MCF 10A (cell line): ENCODE measurements at regions of chr1 and their contacts with region 1.

Region 1: DNA sequence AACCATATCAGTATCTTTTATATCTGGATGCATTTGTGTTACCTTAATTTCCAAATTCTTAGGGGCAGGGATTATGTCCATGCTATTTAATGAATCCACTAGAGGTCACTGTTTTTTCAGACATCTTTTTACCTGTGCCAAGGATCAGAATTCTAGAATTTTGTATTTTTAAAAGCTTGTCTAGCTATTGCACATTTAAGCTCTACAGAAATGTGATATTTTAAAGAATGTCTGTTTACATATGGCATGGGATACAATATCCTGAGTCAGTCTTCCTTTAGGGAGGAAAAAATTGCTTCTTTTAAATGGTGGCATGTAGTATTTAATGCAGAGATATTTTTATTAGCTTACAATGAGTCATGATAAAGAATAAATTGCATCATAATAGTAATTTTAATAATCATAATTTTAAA is 11.3 kb downstream of the RPAP2 start:
- DNase-seq: peak; percentile 37
- H3K4me3 Mint-ChIP-seq: no peak overlapping the region
- H3K27ac Mint-ChIP-seq: no peak overlapping the region
- H3K4me1 Mint-ChIP-seq: no peaks in the 10 kb centered on the region
- H3K27me3 Mint-ChIP-seq: no peaks in the 10 kb centered on the region
- CTCF ChIP-seq: peak; percentile 63

Region 2: GRCh38 chr1:92298573-92299476 is 11.4 kb before region 1 on chr1 and contains the starts of genes GLMN and RPAP2:
- CTCF ChIA-PET with region 1: interaction called, 11 read pairs
- POLR2A ChIA-PET with region 1: interaction called, 4 read pairs
- intact Hi-C with region 1: no loop called
- DNase-seq: peak; percentile 89
- H3K4me3 Mint-ChIP-seq: peak within 1 kb of the TSS; percentile 97
- H3K27ac Mint-ChIP-seq: peak within 1 kb of the TSS; percentile 96
- H3K4me1 Mint-ChIP-seq: peaks cover 10% of the 10 kb centered on the region
- H3K27me3 Mint-ChIP-seq: no peaks in the 10 kb centered on the region
- CTCF ChIP-seq: peak; percentile 3
- total RNA-seq, gene GLMN: 8.6 and 10.1 TPM in 2 replicates
- total RNA-seq, gene RPAP2: 26.2 and 29.3 TPM in 2 replicates

Region 3: DNA sequence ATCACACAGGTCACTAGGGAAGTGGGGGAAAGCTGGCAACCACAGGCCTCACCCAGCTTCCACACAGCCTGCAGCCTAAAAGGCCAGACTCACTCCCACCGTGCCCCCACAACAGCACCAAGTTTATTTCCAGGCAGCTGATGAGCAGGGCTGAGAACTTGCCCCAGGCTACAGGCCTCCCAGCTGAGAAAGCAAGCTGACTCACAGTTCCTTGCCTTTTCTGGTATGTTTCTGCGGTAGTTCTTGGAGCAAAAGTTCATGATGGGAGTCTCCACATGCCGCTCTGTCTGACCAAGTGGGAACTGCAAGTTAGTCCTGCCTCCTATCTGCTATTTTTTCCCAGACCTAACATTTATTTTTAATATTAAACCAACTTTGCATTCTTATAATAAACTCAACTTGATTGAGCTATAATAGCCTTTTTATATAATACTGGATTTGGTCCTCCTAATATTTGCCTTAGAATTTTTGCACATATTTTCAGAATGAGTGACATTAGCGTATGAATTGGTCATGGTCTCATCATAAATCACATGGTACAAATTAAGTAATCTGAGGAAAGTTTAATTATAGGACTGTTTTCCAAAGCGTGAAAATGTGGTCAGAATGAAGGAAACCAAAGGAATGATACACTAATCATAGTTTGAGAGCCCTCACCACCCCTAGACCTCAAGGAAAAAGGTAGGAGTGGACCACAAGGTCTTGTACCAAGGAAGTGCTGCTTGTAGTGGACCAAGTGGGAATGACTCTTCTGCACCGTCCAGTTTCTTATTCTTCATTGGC is 19.3 kb after region 1 on chr1:
- CTCF ChIA-PET with region 1: interaction called, 14 read pairs
- POLR2A ChIA-PET with region 1: interaction called, 3 read pairs
- intact Hi-C with region 1: no loop called
- DNase-seq: peak; percentile 92
- H3K4me3 Mint-ChIP-seq: no peak overlapping the region
- H3K27ac Mint-ChIP-seq: no peak overlapping the region
- H3K4me1 Mint-ChIP-seq: peaks cover 13% of the 10 kb centered on the region
- H3K27me3 Mint-ChIP-seq: no peaks in the 10 kb centered on the region
- CTCF ChIP-seq: no peak

Region 4: GRCh38 chr1:92599184-92599583 is 289.0 kb after region 1 on chr1:
- CTCF ChIA-PET with region 1: interaction called, 13 read pairs
- POLR2A ChIA-PET with region 1: interaction called, 3 read pairs
- intact Hi-C with region 1: loop called (anchors 1 kb)
- DNase-seq: peak; percentile 43
- H3K4me3 Mint-ChIP-seq: no peak overlapping the region
- H3K27ac Mint-ChIP-seq: no peak overlapping the region
- H3K4me1 Mint-ChIP-seq: no peaks in the 10 kb centered on the region
- H3K27me3 Mint-ChIP-seq: no peaks in the 10 kb centered on the region
- CTCF ChIP-seq: peak; percentile 48

Region 5: DNA sequence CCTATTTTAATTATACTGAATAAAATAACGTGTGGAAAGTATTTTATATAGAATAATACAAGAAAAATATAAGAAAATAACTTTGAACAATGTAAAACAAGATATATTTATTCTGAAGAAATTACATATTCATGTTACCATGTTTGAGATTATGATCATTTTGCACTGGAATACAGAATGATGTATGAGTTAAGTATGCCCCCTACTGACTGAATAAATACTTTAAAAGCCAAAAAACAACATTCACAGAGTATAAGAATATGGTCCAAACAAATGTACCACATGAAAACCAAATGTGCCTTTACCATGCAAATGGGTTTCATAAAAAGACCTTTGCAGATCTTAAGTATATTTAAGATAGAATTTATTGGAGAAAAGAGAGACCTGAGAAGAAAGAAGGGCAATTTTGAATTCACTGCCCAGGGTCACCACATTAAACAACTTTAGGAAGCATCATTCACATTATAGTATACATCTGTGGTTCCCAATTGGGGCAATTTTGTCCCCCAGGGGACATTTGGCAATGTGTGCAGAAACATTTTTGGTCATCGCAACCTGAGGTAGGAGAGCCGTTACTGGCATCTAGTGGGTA is 313.1 kb after region 1 on chr1:
- CTCF ChIA-PET with region 1: interaction called, 5 read pairs
- POLR2A ChIA-PET with region 1: no interaction called
- intact Hi-C with region 1: loop called (anchors 1 kb)
- DNase-seq: peak; percentile 21
- H3K4me3 Mint-ChIP-seq: no peak overlapping the region
- H3K27ac Mint-ChIP-seq: no peak overlapping the region
- H3K4me1 Mint-ChIP-seq: no peaks in the 10 kb centered on the region
- H3K27me3 Mint-ChIP-seq: no peaks in the 10 kb centered on the region
- CTCF ChIP-seq: peak; percentile 46